ENCODE measurements at regions of chr17 and their contacts with region 1.

Region 1: GRCh38 chr17:19513897-19514488 is 19.7 kb upstream of the SLC47A1 start:
- DNase-seq: peak; percentile 46 to 71 (median 66)
- ATAC-seq: peak; percentile 82
- H3K4me3 ChIP-seq: no peak overlapping the region
- H3K4me3 Mint-ChIP-seq: no peak overlapping the region
- H3K27ac ChIP-seq: no peak overlapping the region
- H3K27ac Mint-ChIP-seq: peak overlapping the region in 3 of 9 donors; percentile 3 to 56 (median 36)
- H3K4me1 ChIP-seq: peaks cover 0 to 4% of the 10 kb centered on the region in 2 donors
- H3K4me1 Mint-ChIP-seq: peaks cover 0 to 5% (median under 1%) of the 10 kb centered on the region in 7 donors
- H3K27me3 ChIP-seq: no peaks in the 10 kb centered on the region
- H3K27me3 Mint-ChIP-seq: peaks cover 0 to 11% (median 0%) of the 10 kb centered on the region in 5 donors

Region 2: DNA sequence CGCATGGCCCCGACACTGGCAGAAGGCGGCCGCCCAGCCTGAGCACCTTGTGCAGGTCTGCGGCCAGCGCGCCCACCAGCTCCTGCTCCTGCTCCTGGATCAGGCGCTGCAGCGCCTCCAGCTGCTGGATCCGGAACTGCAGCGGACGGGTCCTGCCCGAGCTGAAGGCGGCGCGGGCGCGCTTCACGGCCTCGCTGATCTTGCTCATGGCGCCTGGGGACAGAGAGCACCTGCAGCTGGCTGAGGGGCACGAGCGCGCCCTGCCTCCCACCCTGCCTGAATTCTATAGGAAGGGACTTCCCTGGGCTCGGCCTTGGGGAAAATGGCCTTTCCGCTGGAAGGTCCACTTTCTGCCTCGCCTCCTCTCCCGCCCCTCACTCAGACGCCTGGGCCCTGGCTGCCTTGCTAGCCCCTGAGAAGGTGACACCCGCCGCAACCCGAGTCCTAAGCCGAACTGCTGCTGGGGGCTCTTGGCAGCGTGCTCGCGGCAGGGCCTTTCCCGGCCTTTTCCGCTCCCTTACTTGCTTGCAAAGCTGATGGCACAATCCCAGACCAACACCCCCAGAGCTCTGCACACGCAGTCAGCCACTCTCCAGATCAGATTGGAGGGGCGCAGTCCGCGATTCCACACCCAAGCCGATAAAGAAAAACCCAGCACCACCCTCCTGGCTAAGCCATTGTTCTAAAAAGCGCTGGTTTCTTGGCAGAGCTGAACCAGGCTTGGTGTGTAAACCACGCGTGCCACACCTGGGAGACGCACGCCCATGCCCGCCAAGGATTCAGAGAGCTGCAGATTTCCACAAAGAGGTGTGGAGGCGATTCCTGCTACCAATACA is 231.1 kb after region 1 on chr17:
- CTCF ChIA-PET with region 1: interaction called, 5 read pairs
- POLR2A ChIA-PET with region 1: interaction called, 3 read pairs
- intact Hi-C with region 1: loop called (anchors 1 to 5 kb)
- DNase-seq: peak; percentile 73 to 91 (median 84)
- ATAC-seq: peak; percentile 95
- H3K4me3 ChIP-seq: peak overlapping the region; percentile 27
- H3K4me3 Mint-ChIP-seq: peak overlapping the region; percentile 36 to 78 (median 66)
- H3K27ac ChIP-seq: no peak overlapping the region
- H3K27ac Mint-ChIP-seq: peak overlapping the region in 2 of 9 donors; percentile 40 to 67
- H3K4me1 ChIP-seq: peaks cover 0 to 5% of the 10 kb centered on the region in 2 donors
- H3K4me1 Mint-ChIP-seq: peaks cover 0 to 10% (median 0%) of the 10 kb centered on the region in 7 donors
- H3K27me3 ChIP-seq: no peaks in the 10 kb centered on the region
- H3K27me3 Mint-ChIP-seq: peaks cover 0 to 7% (median 0%) of the 10 kb centered on the region in 5 donors

Region 3: GRCh38 chr17:19771971-19772630 is 258.1 kb after region 1 on chr17:
- CTCF ChIA-PET with region 1: interaction called, 67 read pairs
- POLR2A ChIA-PET with region 1: interaction called, 8 read pairs
- intact Hi-C with region 1: no loop called
- DNase-seq: peak in 7 of 9 donors; percentile 79 to 93 (median 91)
- ATAC-seq: peak; percentile 95
- H3K4me3 ChIP-seq: peak overlapping the region; percentile 58
- H3K4me3 Mint-ChIP-seq: peak overlapping the region; percentile 53 to 86 (median 75)
- H3K27ac ChIP-seq: peak overlapping the region; percentile 70
- H3K27ac Mint-ChIP-seq: peak overlapping the region; percentile 68 to 99 (median 97)
- H3K4me1 ChIP-seq: peaks cover 14 to 72% of the 10 kb centered on the region in 2 donors
- H3K4me1 Mint-ChIP-seq: peaks cover 27 to 97% (median 85%) of the 10 kb centered on the region in 7 donors
- H3K27me3 ChIP-seq: no peaks in the 10 kb centered on the region
- H3K27me3 Mint-ChIP-seq: no peaks in the 10 kb centered on the region

Region 4: GRCh38 chr17:19812407-19812806 is 298.4 kb after region 1 on chr17:
- CTCF ChIA-PET with region 1: interaction called, 5 read pairs
- POLR2A ChIA-PET with region 1: no interaction called
- intact Hi-C with region 1: loop called in 1 of 2 experiments (anchors 1 kb)
- DNase-seq: peak in 6 of 9 donors; percentile 2 to 41 (median 29)
- ATAC-seq: peak; percentile 38
- H3K4me3 ChIP-seq: no peak overlapping the region
- H3K4me3 Mint-ChIP-seq: no peak overlapping the region
- H3K27ac ChIP-seq: no peak overlapping the region
- H3K27ac Mint-ChIP-seq: peak overlapping the region in 2 of 9 donors; percentile 18 to 50
- H3K4me1 ChIP-seq: no peaks in the 10 kb centered on the region
- H3K4me1 Mint-ChIP-seq: peaks cover 0 to 9% (median 3%) of the 10 kb centered on the region in 7 donors
- H3K27me3 ChIP-seq: no peaks in the 10 kb centered on the region
- H3K27me3 Mint-ChIP-seq: no peaks in the 10 kb centered on the region

Region 5: DNA sequence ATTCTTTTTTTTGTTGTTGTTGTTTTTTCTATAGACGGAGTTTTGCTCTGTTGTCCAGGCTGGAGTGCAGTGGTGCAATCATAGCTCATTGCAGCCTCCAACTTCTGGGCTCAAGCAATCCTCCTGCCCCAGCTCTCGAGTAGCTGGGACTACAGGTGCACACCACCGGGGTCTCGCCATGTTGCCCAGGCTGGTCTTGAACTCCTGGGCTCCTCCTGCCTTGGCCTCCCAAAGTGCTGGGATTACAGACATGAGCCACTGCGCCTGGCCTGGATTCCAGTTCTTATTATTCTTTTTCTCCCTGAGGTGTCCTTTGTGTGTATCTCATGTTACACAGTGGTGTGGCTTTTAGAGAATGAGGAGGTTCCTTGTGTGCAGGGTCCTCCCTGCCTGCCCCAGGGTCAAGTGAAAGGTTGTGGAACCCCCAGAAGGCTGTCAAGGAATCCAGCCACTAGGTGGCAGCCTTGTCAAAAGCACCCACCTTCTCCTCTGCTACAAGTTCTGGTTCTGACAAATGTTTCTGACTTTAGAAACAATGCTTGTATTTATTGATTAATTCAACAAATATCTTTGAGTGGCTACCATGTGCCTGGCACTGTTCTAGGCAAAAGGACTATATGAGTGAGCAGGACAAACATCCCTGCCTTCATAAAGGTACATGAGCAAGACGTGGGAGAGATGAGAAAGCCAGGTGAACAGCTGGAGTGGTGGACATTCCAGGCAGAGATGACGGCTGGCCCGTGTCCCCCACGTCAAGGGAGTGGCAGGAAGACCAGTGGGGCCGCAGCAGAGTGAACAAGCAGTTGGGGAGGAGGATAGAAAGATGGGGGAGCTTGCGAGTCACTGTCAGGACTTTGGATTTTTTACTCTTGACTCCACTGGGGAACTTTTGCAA is 607.6 kb after region 1 on chr17:
- CTCF ChIA-PET with region 1: no interaction called
- POLR2A ChIA-PET with region 1: no interaction called
- intact Hi-C with region 1: loop called in 1 of 2 experiments (anchors 5 kb)
- DNase-seq: peak; percentile 42 to 71 (median 64)
- ATAC-seq: peak; percentile 80
- H3K4me3 ChIP-seq: no peak overlapping the region
- H3K4me3 Mint-ChIP-seq: no peak overlapping the region
- H3K27ac ChIP-seq: no peak overlapping the region
- H3K27ac Mint-ChIP-seq: no peak overlapping the region
- H3K4me1 ChIP-seq: no peaks in the 10 kb centered on the region
- H3K4me1 Mint-ChIP-seq: peaks cover 0 to 3% (median 0%) of the 10 kb centered on the region in 7 donors
- H3K27me3 ChIP-seq: no peaks in the 10 kb centered on the region
- H3K27me3 Mint-ChIP-seq: peaks cover 0 to 18% (median 0%) of the 10 kb centered on the region in 5 donors